Activated naive CD4-positive, alpha-beta T cell treated with anti-CD3 and anti-CD28 coated beads for 36 hours (primary cell): ENCODE measurements at regions of chr1 and their contacts with region 1.

Region 1: DNA sequence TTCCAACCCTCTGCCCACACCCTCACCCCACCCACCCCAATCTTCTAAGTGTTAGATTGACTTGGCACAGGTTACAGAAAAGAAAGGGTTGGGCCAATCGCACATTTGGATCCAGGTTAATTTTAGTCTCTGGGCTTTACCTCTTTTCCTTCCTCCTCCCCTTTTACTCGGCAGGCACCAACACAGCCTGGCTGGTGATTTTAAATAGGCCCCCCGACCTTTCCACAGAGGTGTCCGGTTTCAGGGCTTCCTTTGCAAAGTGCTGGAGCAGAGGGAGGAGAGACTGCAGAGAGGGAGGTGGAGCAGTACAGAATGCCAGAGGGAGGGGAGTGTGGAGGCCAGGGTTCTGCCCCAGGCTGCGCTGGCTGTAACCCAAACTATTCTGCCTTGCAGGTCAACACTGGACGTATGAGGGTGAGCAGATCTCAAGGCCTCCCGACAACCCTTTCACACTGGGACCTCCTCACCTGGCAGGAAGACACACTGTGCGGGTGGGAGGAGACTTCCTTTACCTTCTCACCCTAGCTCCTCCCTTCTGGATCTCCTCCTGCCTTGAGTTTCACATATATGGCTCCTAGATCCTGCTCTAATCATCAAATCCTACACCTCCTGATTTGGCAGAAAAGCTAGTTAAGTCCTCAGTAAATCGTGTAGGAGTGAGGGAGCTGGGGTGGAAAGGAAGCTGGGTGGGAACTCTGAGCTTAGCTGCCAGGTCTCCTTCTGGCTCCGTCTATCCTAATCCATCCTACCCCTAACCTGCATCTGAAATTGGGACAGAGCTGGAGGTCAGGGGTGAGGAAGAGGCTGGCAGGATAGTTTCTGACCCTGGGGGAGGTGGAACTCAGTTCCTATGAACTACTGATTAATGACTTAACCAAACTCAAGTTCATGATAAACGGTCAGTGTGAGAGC is 2.4 kb downstream of the CA14 start:
- DNase-seq: no peak
- H3K4me3 Mint-ChIP-seq: no peak overlapping the region
- H3K27ac Mint-ChIP-seq: no peak overlapping the region
- H3K4me1 Mint-ChIP-seq: peaks cover 22% of the 10 kb centered on the region
- H3K27me3 Mint-ChIP-seq: peaks cover 19% of the 10 kb centered on the region

Region 2: GRCh38 chr1:149937060-149937705 is 322.8 kb before region 1 on chr1:
- CTCF ChIA-PET with region 1: no interaction called
- intact Hi-C with region 1: no loop called
- DNase-seq: no peak
- H3K4me3 Mint-ChIP-seq: no peak overlapping the region
- H3K27ac Mint-ChIP-seq: peak overlapping the region; percentile 54
- H3K4me1 Mint-ChIP-seq: peaks cover 41% of the 10 kb centered on the region
- H3K27me3 Mint-ChIP-seq: no peaks in the 10 kb centered on the region

Region 3: GRCh38 chr1:150281837-150282653 is 22.0 kb after region 1 on chr1 and contains the start of gene CIART:
- CTCF ChIA-PET with region 1: interaction called, 68 read pairs
- intact Hi-C with region 1: loop called (anchors 1 kb)
- DNase-seq: peak; percentile 78
- H3K4me3 Mint-ChIP-seq: peak within 1 kb of the TSS; percentile 82
- H3K27ac Mint-ChIP-seq: no peak within 1 kb of the TSS
- H3K4me1 Mint-ChIP-seq: peaks cover 24% of the 10 kb centered on the region
- H3K27me3 Mint-ChIP-seq: no peaks in the 10 kb centered on the region
- total RNA-seq, gene CIART: 0.84 to 1.0 TPM

Region 4: GRCh38 chr1:150372580-150372979 is 112.6 kb after region 1 on chr1:
- CTCF ChIA-PET with region 1: no interaction called
- intact Hi-C with region 1: no loop called
- DNase-seq: no peak
- H3K4me3 Mint-ChIP-seq: no peak overlapping the region
- H3K27ac Mint-ChIP-seq: no peak overlapping the region
- H3K4me1 Mint-ChIP-seq: peaks cover 70% of the 10 kb centered on the region
- H3K27me3 Mint-ChIP-seq: no peaks in the 10 kb centered on the region

Region 5: DNA sequence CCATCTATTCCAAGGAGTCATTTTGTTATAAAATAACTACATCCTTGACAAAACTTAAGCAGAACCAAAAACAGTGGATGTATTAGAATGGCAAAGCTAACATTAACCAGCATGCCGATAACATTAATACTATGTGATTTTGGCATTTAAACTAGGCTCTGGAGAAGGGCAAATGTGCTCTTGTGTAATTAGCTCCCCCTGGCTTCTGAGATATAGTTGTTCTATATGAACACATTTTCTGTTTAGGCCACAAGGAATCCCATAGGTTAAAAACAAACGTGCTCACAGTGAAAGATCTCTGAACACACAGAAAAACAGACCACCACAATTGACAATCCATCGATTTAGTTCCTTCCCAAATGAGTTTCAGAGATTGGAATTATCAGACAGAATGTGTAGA is 169.8 kb after region 1 on chr1:
- CTCF ChIA-PET with region 1: no interaction called
- intact Hi-C with region 1: loop called (anchors 1 kb)
- DNase-seq: no peak
- H3K4me3 Mint-ChIP-seq: no peak overlapping the region
- H3K27ac Mint-ChIP-seq: peak overlapping the region; percentile 42
- H3K4me1 Mint-ChIP-seq: peaks cover 11% of the 10 kb centered on the region
- H3K27me3 Mint-ChIP-seq: no peaks in the 10 kb centered on the region

Region 6: DNA sequence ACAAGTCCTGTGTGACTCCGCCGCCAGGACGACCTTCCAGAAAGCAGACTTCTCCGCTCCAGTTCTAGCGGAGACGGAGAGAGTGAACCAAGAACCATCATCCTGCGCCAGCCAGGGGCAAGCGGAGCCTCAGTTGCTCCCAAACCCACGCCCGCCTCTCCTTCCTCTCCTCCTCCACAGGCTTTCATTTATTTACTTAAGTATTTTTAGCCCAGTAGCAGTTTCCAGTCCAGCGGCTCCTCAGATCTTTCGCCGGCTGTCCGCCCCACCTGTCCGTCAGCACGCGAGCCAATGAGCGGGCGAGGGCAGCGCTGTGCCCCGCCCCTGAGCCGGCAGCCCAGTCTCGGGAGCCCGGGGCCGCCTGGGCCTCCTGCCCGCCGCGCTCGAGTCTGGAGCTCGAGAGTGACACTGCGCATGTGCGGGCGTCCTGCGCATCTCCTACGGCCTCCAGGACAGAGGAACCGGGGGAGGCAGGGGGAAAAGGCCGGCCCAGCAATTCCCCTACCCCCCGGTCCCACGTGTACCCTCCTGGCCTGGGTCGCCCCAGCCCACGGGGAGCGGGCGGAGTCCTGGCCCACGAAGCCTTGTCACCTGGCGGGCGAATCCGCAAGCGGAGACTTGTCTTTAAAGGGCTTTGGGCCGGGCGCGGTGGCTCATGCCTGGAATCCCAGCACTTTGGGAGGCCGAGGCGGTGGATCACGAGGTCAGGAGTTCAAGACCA is 255.5 kb after region 1 on chr1 and contains the start of gene FALEC:
- CTCF ChIA-PET with region 1: interaction called, 3 read pairs
- intact Hi-C with region 1: loop called (anchors 1 kb)
- DNase-seq: peak; percentile 91
- H3K4me3 Mint-ChIP-seq: peak within 1 kb of the TSS; percentile 90
- H3K27ac Mint-ChIP-seq: peak within 1 kb of the TSS; percentile 20
- H3K4me1 Mint-ChIP-seq: peaks cover 9% of the 10 kb centered on the region
- H3K27me3 Mint-ChIP-seq: no peaks in the 10 kb centered on the region
- total RNA-seq, gene FALEC: not detected

Region 7: DNA sequence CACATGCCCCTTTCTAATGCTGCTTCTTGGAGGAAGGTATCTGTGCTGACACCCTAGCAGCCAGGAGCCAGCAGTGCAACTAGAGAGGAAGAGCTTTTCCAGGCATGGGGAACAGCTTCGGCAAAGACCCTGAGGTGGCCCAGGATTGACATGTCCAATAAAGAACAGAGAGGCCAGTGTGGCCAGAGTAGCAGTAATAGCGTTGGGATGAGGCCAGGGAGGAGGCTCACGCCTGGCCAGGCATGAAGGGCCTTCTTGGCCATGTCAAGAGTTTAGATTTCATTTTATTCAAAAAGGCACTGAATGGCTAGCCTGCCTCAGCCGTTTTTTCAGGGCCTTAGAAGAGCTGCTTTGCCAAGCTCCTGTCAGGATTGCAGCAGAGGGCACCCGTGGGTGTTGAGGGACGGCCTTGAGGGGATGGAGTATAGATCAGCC is 272.9 kb after region 1 on chr1:
- CTCF ChIA-PET with region 1: interaction called, 3 read pairs
- intact Hi-C with region 1: loop called (anchors 1 kb)
- DNase-seq: no peak
- H3K4me3 Mint-ChIP-seq: no peak overlapping the region
- H3K27ac Mint-ChIP-seq: no peak overlapping the region
- H3K4me1 Mint-ChIP-seq: peaks cover 2% of the 10 kb centered on the region
- H3K27me3 Mint-ChIP-seq: peaks cover 3% of the 10 kb centered on the region

Region 8: DNA sequence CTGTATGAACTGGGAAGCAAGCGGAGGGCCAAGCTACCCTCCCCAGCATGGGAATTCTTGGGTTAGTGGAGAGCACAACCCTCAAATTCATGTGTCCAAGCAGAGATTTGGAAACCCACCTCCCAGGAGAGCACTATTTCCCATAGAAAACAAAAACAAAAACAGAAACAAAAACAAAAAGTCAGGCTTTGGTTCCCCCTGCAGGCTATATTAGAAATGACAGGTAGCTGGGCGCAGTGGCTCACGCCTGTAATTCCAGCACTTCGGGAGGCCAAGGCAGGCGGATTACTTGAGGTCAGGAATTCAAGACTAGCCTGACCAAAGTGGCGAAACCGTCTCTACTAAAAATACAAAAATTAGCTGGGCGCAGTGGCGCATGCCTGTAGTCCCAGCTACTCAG is 735.9 kb after region 1 on chr1:
- CTCF ChIA-PET with region 1: interaction called, 3 read pairs
- intact Hi-C with region 1: loop called (anchors 2 kb)
- DNase-seq: peak; percentile 36
- H3K4me3 Mint-ChIP-seq: no peak overlapping the region
- H3K27ac Mint-ChIP-seq: peak overlapping the region; percentile 41
- H3K4me1 Mint-ChIP-seq: peaks cover 25% of the 10 kb centered on the region
- H3K27me3 Mint-ChIP-seq: no peaks in the 10 kb centered on the region